CD4-positive, alpha-beta memory T cell (primary cell): ENCODE measurements at regions of chr1 and their contacts with region 1.

Region 1: GRCh38 chr1:205711104-205712020 is 31.1 kb upstream of the SLC45A3 start:
- DNase-seq: peak; percentile 54 to 67 (median 62)
- H3K4me3 ChIP-seq: no peak overlapping the region
- H3K4me3 Mint-ChIP-seq: no peak overlapping the region
- H3K27ac ChIP-seq: no peak overlapping the region
- H3K27ac Mint-ChIP-seq: peak overlapping the region in 4 of 7 donors; percentile 25 to 68 (median 56)
- H3K4me1 ChIP-seq: peaks cover 3% of the 10 kb centered on the region
- H3K4me1 Mint-ChIP-seq: peaks cover 5 to 14% (median 11%) of the 10 kb centered on the region in 4 donors
- H3K27me3 ChIP-seq: no peaks in the 10 kb centered on the region
- H3K27me3 Mint-ChIP-seq: no peaks in the 10 kb centered on the region

Region 2: GRCh38 chr1:205729945-205730610 is 18.7 kb after region 1 on chr1:
- CTCF ChIA-PET with region 1: interaction called, 79 read pairs
- POLR2A ChIA-PET with region 1: interaction called, 4 read pairs
- intact Hi-C with region 1: no loop called
- DNase-seq: no peak
- H3K4me3 ChIP-seq: no peak overlapping the region
- H3K4me3 Mint-ChIP-seq: no peak overlapping the region
- H3K27ac ChIP-seq: no peak overlapping the region
- H3K27ac Mint-ChIP-seq: peak overlapping the region in 3 of 7 donors; percentile 2 to 46 (median 13)
- H3K4me1 ChIP-seq: peaks cover 17% of the 10 kb centered on the region
- H3K4me1 Mint-ChIP-seq: peaks cover 17 to 49% (median 32%) of the 10 kb centered on the region in 4 donors
- H3K27me3 ChIP-seq: no peaks in the 10 kb centered on the region
- H3K27me3 Mint-ChIP-seq: no peaks in the 10 kb centered on the region

Region 3: DNA sequence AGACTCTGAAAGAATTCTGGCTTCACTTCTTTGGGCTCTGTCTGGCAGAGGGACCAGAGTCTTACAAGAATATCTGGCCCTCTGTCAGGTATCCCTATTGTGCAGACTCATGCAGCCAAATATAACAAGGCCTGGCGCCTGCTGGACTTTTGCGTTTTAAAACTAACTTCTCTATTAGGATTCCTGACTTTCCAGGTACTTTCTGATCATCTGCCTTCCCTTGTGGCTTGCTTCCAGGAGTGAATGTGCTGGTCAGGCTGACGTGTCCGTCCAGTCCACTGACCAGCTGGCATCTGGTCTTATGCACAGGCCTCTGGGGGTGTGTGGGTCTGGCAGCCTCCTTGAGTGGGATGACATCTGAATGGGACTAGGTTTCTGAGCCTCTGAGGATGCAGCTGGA is 72.5 kb after region 1 on chr1:
- CTCF ChIA-PET with region 1: interaction called, 10 read pairs
- POLR2A ChIA-PET with region 1: no interaction called
- intact Hi-C with region 1: no loop called
- DNase-seq: no peak
- H3K4me3 ChIP-seq: no peak overlapping the region
- H3K4me3 Mint-ChIP-seq: no peak overlapping the region
- H3K27ac ChIP-seq: no peak overlapping the region
- H3K27ac Mint-ChIP-seq: peak overlapping the region in 1 of 7 donors; percentile 22
- H3K4me1 ChIP-seq: peaks cover 8% of the 10 kb centered on the region
- H3K4me1 Mint-ChIP-seq: peaks cover 7 to 12% (median 10%) of the 10 kb centered on the region in 4 donors
- H3K27me3 ChIP-seq: no peaks in the 10 kb centered on the region
- H3K27me3 Mint-ChIP-seq: no peaks in the 10 kb centered on the region